Activated CD8-positive, alpha-beta T cell treated with anti-CD3 and anti-CD28 coated beads for 36 hours (primary cell): ENCODE measurements at regions of chr2 and their contacts with region 1.

Region 1: GRCh38 chr2:241877989-241878970 is 8.8 kb downstream of the RTP5 start:
- DNase-seq: peak; percentile 84
- ATAC-seq: no peak
- H3K4me3 Mint-ChIP-seq: no peak overlapping the region
- H3K27ac Mint-ChIP-seq: no peak overlapping the region
- H3K4me1 Mint-ChIP-seq: peaks cover 33% of the 10 kb centered on the region
- H3K27me3 Mint-ChIP-seq: no peaks in the 10 kb centered on the region
- CTCF ChIP-seq: peak; percentile 55

Region 2: GRCh38 chr2:241686649-241687425 is 191.4 kb before region 1 on chr2 and contains the start of gene DTYMK:
- CTCF ChIA-PET with region 1: interaction called, 9 read pairs
- POLR2A ChIA-PET with region 1: interaction called, 4 read pairs
- intact Hi-C with region 1: loop called (anchors 5 kb)
- DNase-seq: peak; percentile 97
- ATAC-seq: peak; percentile 97
- H3K4me3 Mint-ChIP-seq: peak within 1 kb of the TSS; percentile 97
- H3K27ac Mint-ChIP-seq: peak within 1 kb of the TSS; percentile 97
- H3K4me1 Mint-ChIP-seq: peaks cover 28% of the 10 kb centered on the region
- H3K27me3 Mint-ChIP-seq: no peaks in the 10 kb centered on the region
- CTCF ChIP-seq: no peak
- total RNA-seq, gene DTYMK: 87.1 to 91.9 TPM

Region 3: GRCh38 chr2:241865957-241866789 is 12.1 kb before region 1 on chr2:
- CTCF ChIA-PET with region 1: interaction called, 62 read pairs
- POLR2A ChIA-PET with region 1: interaction called, 9 read pairs
- intact Hi-C with region 1: no loop called
- DNase-seq: peak; percentile 58
- ATAC-seq: no peak
- H3K4me3 Mint-ChIP-seq: no peak overlapping the region
- H3K27ac Mint-ChIP-seq: no peak overlapping the region
- H3K4me1 Mint-ChIP-seq: peaks cover 80% of the 10 kb centered on the region
- H3K27me3 Mint-ChIP-seq: peaks cover 21% of the 10 kb centered on the region
- CTCF ChIP-seq: no peak